OCI-LY7 (cell line): ENCODE measurements at regions of chr21 and their contacts with region 1.

Region 1: GRCh38 chr21:33374450-33375096 is 28.6 kb upstream of the IFNGR2 start:
- DNase-seq: peak; percentile 87
- H3K4me3 ChIP-seq: peak overlapping the region; percentile 50
- H3K27ac ChIP-seq: peak overlapping the region; percentile 96
- H3K4me1 ChIP-seq: peaks cover 76% of the 10 kb centered on the region
- CTCF ChIP-seq: peak; percentile 95

Region 2: DNA sequence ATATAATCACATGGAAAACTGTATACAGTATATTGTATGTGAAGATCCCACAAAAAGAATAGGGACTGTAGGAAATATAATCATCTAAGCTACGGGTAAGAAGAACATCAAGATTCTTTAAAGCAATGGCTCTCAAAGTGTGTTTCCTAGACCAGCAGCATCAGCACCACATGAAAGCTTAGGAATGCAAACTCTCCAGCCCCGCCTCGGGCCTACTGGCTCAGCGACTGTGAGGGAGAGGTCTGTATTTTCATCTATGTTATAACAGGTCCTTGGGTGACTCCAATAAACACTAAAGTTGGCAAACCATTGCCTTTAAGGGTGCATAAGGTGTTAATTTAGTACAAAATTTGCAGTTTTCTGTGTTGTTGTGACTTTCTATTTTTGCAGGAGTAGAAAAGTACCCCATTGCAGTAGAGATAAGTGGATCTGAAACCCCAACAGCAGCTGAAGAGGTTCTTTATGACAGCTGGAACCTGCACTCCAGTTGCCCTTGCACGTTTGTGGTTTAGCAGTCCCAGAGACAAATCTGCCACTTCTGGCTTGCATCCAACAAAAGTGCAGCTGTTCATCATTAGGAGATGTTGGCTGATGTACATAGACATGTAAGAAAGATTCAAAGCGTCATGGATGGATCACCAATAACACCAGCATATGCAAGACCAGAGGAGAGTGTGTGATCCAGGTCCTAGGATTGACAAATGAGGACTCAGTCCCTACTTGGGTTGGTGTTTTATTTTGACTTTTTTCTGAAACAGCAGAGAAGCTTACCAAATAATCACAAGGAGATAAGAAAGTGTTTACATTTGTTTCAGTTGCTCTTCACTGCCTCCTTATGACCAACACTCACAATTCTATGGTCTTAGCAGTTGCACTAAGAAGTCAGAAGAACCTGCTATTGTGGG is 65.7 kb before region 1 on chr21:
- CTCF ChIA-PET with region 1: no interaction called
- POLR2A ChIA-PET with region 1: no interaction called
- intact Hi-C with region 1: loop called (anchors 1 kb)
- DNase-seq: peak; percentile 100
- H3K4me3 ChIP-seq: peak overlapping the region; percentile 42
- H3K27ac ChIP-seq: peak overlapping the region; percentile 99
- H3K4me1 ChIP-seq: peaks cover 100% of the 10 kb centered on the region
- CTCF ChIP-seq: peak; percentile 80